Esophagus muscularis mucosa (tissue), 4 donors: ENCODE measurements at regions of chr11 and their contacts with region 1.

Region 1: DNA sequence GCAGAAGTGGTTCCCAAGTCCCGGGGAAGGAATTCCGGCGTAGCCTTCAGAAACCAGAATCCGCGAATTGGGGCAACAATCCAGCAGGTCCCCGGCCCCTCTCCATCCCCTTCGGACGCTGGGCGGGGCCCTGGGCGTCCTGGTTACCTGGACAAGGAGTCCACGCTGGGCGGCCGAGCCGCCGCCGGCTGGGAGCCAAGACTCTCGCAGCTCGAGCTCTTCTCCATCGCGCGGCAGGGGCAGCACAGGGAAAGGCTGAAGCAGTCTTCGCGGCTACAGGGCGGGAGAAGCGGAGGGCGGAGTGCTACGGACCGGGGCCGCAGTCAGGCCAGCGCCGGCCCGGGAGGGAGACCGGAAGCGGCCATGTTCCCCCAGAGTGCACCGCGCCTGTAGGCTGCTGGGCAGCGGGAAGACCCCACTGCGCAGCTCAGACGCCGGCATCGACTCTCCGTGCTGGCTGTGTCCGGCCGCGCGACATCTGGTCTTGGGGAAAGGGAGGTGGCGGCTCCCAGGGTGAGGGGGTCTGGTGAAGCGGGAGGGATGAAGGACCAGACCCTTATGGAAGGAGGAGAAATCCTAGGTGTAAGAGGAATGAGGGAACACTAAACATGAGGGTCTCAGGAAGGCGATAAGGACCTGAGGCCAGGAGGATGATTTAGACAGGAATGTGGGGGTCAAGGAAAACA is at the start of gene MTMR2:
- DNase-seq: peak; percentile 93
- H3K4me3 ChIP-seq: peak within 1 kb of the TSS; percentile 70 to 97 (median 85)
- H3K27ac ChIP-seq: peak within 1 kb of the TSS; percentile 95 to 97 (median 96)
- H3K4me1 ChIP-seq: peaks cover 12 to 42% (median 31%) of the 10 kb centered on the region in 4 donors
- H3K27me3 ChIP-seq: no peaks in the 10 kb centered on the region
- CTCF ChIP-seq: no peak
- EP300 ChIP-seq: no peak
- POLR2A ChIP-seq: peak; percentile 21
- total RNA-seq, gene MTMR2: 25.8 to 29.6 (median 27.9) TPM

Region 2: DNA sequence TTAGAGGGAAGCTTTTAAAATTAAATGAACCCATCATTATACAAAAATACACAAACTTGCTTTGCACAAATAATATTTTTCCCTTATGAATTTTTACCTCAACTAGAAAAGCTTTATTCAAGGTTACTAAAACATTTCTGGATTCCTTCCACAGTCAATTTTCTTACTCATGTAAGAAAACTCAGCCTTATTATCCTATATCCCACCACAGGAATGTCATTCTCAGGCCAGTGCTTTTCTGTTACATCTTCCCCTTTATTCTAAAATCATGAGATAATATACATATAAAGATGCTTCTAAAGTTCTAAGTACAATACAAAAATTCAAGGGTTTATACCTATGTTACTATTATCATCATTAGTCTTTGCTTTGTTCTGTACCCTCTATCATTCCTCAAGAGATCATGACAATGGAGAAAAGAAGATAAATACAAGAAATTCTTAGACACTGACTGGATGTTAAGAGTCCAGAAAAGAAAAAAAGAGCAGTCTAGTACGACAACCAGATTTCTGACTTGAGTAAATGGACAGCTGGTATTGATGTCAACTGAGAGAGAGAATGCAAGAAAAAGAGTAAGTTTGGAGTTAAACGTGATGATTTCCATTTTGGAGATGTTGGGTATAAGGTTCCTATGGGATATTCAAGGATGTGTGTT is 60.3 kb before region 1 on chr11:
- intact Hi-C with region 1: no loop called
- DNase-seq: no peak
- H3K4me3 ChIP-seq: no peak overlapping the region
- H3K27ac ChIP-seq: no peak overlapping the region
- H3K4me1 ChIP-seq: no peaks in the 10 kb centered on the region
- H3K27me3 ChIP-seq: no peaks in the 10 kb centered on the region
- CTCF ChIP-seq: no peak
- EP300 ChIP-seq: no peak
- POLR2A ChIP-seq: no peak

Region 3: GRCh38 chr11:95991101-95991500 is 67.2 kb after region 1 on chr11:
- intact Hi-C with region 1: no loop called
- DNase-seq: no peak
- H3K4me3 ChIP-seq: no peak overlapping the region
- H3K27ac ChIP-seq: peak overlapping the region in 1 of 4 donors; percentile 10
- H3K4me1 ChIP-seq: peaks cover 0 to 11% (median 0%) of the 10 kb centered on the region in 4 donors
- H3K27me3 ChIP-seq: no peaks in the 10 kb centered on the region
- CTCF ChIP-seq: no peak
- EP300 ChIP-seq: no peak
- POLR2A ChIP-seq: no peak

Region 4: DNA sequence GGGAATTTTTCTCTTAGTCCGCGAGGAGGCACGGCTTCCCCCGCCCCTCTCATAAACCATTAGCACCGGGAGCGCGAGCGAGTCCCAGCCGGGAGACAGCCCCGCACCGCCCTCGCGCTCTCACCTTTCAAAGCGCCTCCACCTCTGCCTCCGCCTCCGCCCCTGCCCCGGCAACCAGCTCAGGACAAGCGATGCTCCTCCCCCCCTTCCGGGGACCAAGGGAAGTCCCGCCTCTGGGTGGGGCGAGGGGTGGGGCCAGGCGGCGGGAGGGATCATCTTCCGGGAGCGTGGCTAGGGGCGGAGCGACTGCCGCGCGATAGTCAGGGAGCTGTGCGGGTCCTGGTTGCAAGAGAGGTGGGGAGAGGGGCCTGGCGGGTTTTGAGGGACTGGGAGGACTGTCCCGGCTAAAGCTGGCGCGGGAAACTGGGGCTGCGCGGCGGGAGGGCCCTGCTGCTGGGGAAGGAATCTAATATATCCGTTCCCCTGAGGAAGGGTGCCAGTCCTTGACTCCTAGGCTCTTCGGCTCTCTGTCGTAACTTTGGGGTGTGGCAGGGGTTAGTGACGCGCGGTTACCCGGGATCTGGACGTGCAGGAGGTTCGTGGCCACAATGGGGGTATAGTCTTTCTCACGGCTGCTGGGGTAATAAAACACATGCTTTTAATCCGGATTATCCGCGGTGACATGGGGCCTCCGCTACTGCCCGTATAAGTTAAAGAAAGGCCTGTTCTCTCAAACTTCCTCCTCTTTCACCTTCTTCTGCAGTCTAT is 466.0 kb after region 1 on chr11 and contains the starts of genes CCDC82 and JRKL:
- intact Hi-C with region 1: loop called (anchors 10 kb)
- DNase-seq: peak; percentile 98
- H3K4me3 ChIP-seq: peak within 1 kb of the TSS; percentile 82 to 99 (median 90)
- H3K27ac ChIP-seq: peak within 1 kb of the TSS; percentile 87 to 90 (median 89)
- H3K4me1 ChIP-seq: peaks cover 14 to 32% (median 21%) of the 10 kb centered on the region in 4 donors
- H3K27me3 ChIP-seq: no peaks in the 10 kb centered on the region
- CTCF ChIP-seq: peak in 1 of 3 experiments; percentile 12
- EP300 ChIP-seq: no peak
- POLR2A ChIP-seq: peak; percentile 87
- total RNA-seq, gene CCDC82: 12.3 to 23.3 (median 14.7) TPM
- total RNA-seq, gene JRKL: 4.5 to 7.9 (median 6.9) TPM